Body of pancreas (tissue), 4 donors: ENCODE measurements at regions of chr7 and their contacts with region 1.

Region 1: GRCh38 chr7:151448261-151449252 is 8.6 kb upstream of the CRYGN start:
- DNase-seq: peak; percentile 67 to 76 (median 74)
- ATAC-seq: peak; percentile 88
- H3K4me3 ChIP-seq: peak overlapping the region; percentile 25 to 37
- H3K27ac ChIP-seq: peak overlapping the region in 3 of 4 donors; percentile 6 to 48 (median 36)
- H3K4me1 ChIP-seq: peaks cover 6% of the 10 kb centered on the region
- H3K27me3 ChIP-seq: no peaks in the 10 kb centered on the region
- CTCF ChIP-seq: peak; percentile 79 to 88 (median 84)
- POLR2A ChIP-seq: no peak

Region 2: DNA sequence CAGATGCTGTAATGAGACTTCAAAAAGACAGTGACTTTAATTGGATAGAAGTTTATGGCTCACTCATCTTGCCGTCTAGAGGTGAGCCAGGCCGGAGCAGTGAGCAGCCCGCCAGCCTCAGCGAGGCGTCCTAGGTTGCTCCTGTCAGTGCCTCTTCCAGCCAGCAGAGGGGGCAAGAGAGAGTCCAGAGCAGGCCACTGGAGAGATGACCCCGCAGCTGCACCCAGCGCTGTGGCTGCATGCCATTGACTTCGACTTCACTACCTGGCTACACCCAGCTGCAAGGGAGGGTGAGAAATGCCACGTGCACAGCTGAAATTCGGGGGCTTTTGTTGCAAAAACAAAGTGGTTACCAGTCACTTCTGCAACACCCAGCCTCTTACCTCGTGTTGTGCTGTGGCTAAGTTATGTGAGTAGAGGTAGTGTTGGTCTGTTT is 80.4 kb before region 1 on chr7:
- intact Hi-C with region 1: loop called (anchors 5 kb)
- DNase-seq: peak; percentile 83 to 90 (median 88)
- ATAC-seq: peak; percentile 91
- H3K4me3 ChIP-seq: no peak overlapping the region
- H3K27ac ChIP-seq: no peak overlapping the region
- H3K4me1 ChIP-seq: peaks cover 7% of the 10 kb centered on the region
- H3K27me3 ChIP-seq: no peaks in the 10 kb centered on the region
- CTCF ChIP-seq: peak; percentile 83 to 95 (median 89)
- POLR2A ChIP-seq: no peak

Region 3: GRCh38 chr7:151386301-151387132 is 62.0 kb before region 1 on chr7:
- intact Hi-C with region 1: no loop called
- DNase-seq: peak; percentile 39 to 67 (median 48)
- ATAC-seq: peak; percentile 58
- H3K4me3 ChIP-seq: no peak overlapping the region
- H3K27ac ChIP-seq: no peak overlapping the region
- H3K4me1 ChIP-seq: peaks cover 13% of the 10 kb centered on the region
- H3K27me3 ChIP-seq: no peaks in the 10 kb centered on the region
- CTCF ChIP-seq: no peak
- POLR2A ChIP-seq: no peak